BJ (cell line): ENCODE measurements at regions of chr12 and their contacts with region 1.

Region 1: GRCh38 chr12:1939801-1940607 is 21.6 kb upstream of the CACNA2D4 start:
- DNase-seq: peak; percentile 19
- H3K4me3 ChIP-seq: no peak overlapping the region
- H3K27me3 ChIP-seq: no peaks in the 10 kb centered on the region
- CTCF ChIP-seq: peak; percentile 95

Region 2: DNA sequence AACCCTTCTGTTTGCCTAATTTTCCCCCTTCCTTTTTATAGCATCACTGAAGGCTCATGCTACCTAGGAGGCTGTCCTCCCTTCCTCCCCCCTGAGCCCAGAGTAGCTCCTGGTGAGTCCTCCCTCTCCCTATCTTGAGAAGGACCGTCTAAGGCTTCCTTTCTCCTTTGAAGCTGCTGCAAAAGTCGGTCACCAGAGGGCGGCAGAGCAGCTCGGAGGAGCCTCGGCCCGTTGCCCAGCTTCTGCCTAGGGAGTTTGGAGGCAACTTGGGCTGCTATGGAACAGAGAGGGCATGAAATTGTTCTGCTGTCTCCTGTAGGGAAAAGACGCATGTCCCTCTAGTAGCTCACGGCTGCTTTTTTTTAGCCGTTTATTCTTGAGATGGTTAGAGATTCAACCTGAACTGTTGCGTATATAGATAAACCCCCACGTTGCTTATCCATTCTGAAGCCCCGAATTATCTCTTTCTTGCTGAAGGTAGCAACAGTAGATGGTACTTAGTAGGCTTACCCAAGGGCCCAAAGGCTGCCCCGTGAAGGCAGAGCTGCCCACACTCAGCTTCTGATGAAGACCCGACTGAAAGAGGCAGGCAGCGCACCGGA is 305.3 kb before region 1 on chr12:
- CTCF ChIA-PET with region 1: interaction called, 16 read pairs
- POLR2A ChIA-PET with region 1: no interaction called
- DNase-seq: no peak
- H3K4me3 ChIP-seq: no peak overlapping the region
- H3K27me3 ChIP-seq: no peaks in the 10 kb centered on the region
- CTCF ChIP-seq: peak; percentile 95

Region 3: DNA sequence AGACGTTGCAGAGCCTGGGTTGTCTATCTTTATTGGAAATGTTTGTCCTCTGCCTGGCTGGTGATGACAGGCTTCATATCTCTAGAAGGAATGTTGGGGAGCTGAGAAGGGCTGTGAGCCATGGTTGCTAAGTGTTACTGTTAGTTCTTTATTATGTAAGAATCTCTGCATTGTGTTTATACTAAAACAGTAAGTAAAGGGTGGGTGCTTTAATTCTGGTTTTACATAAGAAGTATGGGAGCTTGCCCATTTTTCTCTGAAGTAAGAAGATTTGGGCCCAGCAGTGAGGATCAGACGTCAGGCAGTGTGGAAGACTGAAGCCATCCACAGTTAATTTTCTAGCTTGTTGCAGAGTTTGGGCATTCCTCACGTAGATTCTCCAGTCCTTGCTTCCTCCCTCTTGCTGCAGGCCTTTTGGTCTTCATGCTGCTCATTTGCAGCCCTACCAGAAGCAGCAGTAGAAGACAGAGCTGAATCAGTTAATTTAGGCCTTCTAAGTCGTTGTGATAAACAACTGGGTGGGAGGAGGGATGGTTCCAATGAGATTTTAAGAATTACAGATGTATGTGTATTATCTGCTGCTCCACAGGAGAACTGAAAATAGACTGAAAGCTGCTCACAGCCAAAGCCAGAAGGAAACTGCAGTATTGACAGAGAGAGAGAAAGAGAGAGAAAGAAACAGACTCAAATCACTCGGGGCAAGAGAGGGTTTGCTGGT is 289.6 kb before region 1 on chr12:
- CTCF ChIA-PET with region 1: interaction called, 24 read pairs
- POLR2A ChIA-PET with region 1: no interaction called
- DNase-seq: no peak
- H3K4me3 ChIP-seq: no peak overlapping the region
- H3K27me3 ChIP-seq: no peaks in the 10 kb centered on the region
- CTCF ChIP-seq: no peak

Region 4: DNA sequence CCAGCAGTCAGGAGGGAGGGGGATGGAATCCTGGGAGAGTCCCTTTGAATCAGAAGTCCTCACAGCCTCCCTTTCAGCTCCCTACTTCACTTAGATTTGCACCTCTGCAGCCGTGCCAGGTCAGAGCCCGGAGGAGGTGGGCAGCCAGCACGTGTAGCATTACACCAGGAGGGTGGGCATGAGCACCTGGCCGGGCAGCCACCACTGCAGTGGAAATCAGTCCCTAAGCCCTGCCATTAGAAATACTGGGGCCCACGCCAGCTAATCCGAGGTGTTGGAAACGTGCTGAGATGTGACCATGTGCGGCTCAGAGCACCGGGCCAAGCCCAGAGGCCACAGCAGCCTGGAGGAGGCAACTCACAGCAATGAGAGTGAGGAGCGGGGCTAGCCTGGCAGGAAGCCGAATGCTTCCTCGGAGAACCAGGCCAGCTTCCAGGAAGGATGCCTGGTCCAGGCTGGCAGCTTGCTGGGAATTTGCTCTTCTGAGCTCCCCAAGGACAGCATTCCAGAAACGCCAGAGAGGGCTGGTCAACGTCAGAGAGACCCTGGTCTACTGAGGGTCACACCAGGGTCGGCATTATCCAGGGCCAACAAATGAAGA is 12.2 kb before region 1 on chr12:
- CTCF ChIA-PET with region 1: interaction called, 19 read pairs
- POLR2A ChIA-PET with region 1: no interaction called
- DNase-seq: no peak
- H3K4me3 ChIP-seq: no peak overlapping the region
- H3K27me3 ChIP-seq: peaks cover 32% of the 10 kb centered on the region
- CTCF ChIP-seq: no peak

Region 5: GRCh38 chr12:1956716-1957115 is 16.7 kb after region 1 on chr12:
- CTCF ChIA-PET with region 1: interaction called, 11 read pairs
- POLR2A ChIA-PET with region 1: no interaction called
- DNase-seq: no peak
- H3K4me3 ChIP-seq: no peak overlapping the region
- H3K27me3 ChIP-seq: no peaks in the 10 kb centered on the region
- CTCF ChIP-seq: no peak

Region 6: GRCh38 chr12:2052826-2053674 is 113.0 kb after region 1 on chr12 and contains the start of gene CACNA1C:
- CTCF ChIA-PET with region 1: no interaction called
- POLR2A ChIA-PET with region 1: no interaction called
- DNase-seq: no peak
- H3K4me3 ChIP-seq: peak within 1 kb of the TSS; percentile 61
- H3K27me3 ChIP-seq: 0 out of 2 replicates have a peak, but pooled peaks cover 2% of the 10 kb centered on the region
- CTCF ChIP-seq: peak; percentile 5
- polyA plus RNA-seq, gene CACNA1C: 10.2 and 14.7 TPM in 2 replicates